Caco-2 (cell line): ENCODE measurements at regions of chr1 and their contacts with region 1.

Region 1: DNA sequence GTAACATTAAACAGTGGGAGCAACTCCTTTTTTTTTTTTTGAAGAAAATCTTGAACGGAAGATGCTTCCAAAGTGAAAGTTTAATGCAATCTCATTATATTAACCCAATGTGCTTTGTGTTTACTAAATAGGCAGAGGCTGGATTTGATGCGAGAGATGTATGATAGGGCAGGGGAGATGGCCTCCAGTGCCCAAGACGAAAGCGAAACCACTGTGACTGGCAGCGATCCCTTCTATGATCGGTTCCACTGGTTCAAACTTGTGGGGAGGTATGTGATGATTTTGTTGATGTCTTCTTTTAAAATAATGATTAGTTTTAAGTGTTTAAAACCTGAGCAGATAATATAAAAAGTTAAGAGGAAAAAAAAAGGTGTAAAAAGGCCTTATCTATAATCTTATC is 74.2 kb upstream of the PGD start:
- DNase-seq: no peak
- H3K4me3 ChIP-seq: no peak overlapping the region
- H3K4me3 Mint-ChIP-seq: no peak overlapping the region
- H3K27ac Mint-ChIP-seq: no peak overlapping the region
- H3K4me1 ChIP-seq: no peaks in the 10 kb centered on the region
- H3K4me1 Mint-ChIP-seq: no peaks in the 10 kb centered on the region
- H3K27me3 ChIP-seq: no peaks in the 10 kb centered on the region
- H3K27me3 Mint-ChIP-seq: no peaks in the 10 kb centered on the region
- CTCF ChIP-seq: no peak

Region 2: DNA sequence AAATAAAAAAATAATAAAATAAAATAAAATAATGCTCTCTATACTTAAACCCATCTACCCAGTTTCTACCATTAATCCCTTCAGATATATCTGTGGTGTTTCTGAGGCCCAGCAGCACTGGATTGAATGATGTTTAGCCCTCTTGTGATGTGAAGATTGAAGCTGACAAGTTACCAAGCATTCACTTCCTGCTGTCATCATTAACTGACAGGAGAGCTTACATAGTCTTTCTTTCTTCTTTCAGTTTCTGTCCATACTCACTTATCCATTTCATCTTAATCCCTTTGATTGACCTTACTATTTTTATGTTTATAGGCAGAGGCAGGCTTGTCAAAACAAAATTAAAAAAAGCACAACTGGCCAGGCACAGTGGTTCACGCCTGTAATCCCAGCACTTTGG is 35.4 kb after region 1 on chr1:
- CTCF ChIA-PET with region 1: no interaction called
- POLR2A ChIA-PET with region 1: interaction called, 17 read pairs
- intact Hi-C with region 1: no loop called
- DNase-seq: no peak
- H3K4me3 ChIP-seq: no peak overlapping the region
- H3K4me3 Mint-ChIP-seq: no peak overlapping the region
- H3K27ac Mint-ChIP-seq: no peak overlapping the region
- H3K4me1 ChIP-seq: no peaks in the 10 kb centered on the region
- H3K4me1 Mint-ChIP-seq: no peaks in the 10 kb centered on the region
- H3K27me3 ChIP-seq: no peaks in the 10 kb centered on the region
- H3K27me3 Mint-ChIP-seq: no peaks in the 10 kb centered on the region
- CTCF ChIP-seq: no peak

Region 3: GRCh38 chr1:12100071-12100470 is 1775.4 kb after region 1 on chr1:
- CTCF ChIA-PET with region 1: no interaction called
- POLR2A ChIA-PET with region 1: no interaction called
- intact Hi-C with region 1: no loop called
- DNase-seq: no peak
- H3K4me3 ChIP-seq: no peak overlapping the region
- H3K4me3 Mint-ChIP-seq: no peak overlapping the region
- H3K27ac Mint-ChIP-seq: no peak overlapping the region
- H3K4me1 ChIP-seq: no peaks in the 10 kb centered on the region
- H3K4me1 Mint-ChIP-seq: no peaks in the 10 kb centered on the region
- H3K27me3 ChIP-seq: no peaks in the 10 kb centered on the region
- H3K27me3 Mint-ChIP-seq: peaks cover 9% of the 10 kb centered on the region
- CTCF ChIP-seq: no peak